H1 (cell line): ENCODE measurements at regions of chr6 and their contacts with region 1.

Region 1: DNA sequence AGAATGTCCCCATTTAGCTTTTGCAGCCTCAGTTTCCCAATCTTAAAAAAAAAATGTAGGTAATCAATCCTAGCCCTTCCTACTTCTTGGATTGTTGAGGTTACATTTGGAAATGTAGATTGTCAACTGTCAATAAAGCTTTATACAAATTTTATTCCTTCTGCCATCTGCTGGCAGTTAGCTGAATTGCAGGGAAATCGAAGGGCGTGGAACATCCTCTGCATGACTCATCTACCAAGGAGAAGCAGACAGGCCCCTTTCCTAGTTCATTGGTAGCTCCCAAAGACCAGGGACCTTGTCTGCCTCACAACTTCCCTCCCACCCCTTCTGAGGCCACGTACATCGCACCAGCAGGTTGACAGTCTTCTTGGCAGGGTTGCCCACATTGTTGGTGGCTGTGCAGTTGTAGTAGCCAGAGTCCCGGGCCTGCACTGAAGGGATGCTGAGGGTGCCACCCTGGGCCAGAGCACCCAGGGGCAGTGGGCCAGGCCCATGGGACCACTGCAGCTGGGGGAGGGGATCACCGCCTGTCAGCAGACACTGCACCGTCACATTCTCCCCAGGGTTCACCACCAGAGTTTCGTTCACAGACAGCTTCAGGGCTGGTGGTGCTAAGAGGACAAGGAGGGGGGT is 43.6 kb downstream of the MDGA1 start:
- DNase-seq: peak; percentile 15 to 81
- H3K4me3 ChIP-seq: no peak overlapping the region
- H3K27ac ChIP-seq: no peak overlapping the region
- H3K4me1 ChIP-seq: peaks cover 0 to 6% (median 1%) of the 10 kb centered on the region in 4 experiments; a peak in 3 of 7 replicates
- H3K27me3 ChIP-seq: peaks cover 3 to 21% (median 16%) of the 10 kb centered on the region in 4 experiments
- CTCF ChIP-seq: peak in 2 of 3 experiments; percentile 62 to 86; a peak in 3 of 4 replicates
- EP300 ChIP-seq: no peak
- POLR2A ChIP-seq: no peak
- RAD21 ChIP-seq: peak; percentile 25 to 36; a peak in 2 of 4 replicates

Region 2: DNA sequence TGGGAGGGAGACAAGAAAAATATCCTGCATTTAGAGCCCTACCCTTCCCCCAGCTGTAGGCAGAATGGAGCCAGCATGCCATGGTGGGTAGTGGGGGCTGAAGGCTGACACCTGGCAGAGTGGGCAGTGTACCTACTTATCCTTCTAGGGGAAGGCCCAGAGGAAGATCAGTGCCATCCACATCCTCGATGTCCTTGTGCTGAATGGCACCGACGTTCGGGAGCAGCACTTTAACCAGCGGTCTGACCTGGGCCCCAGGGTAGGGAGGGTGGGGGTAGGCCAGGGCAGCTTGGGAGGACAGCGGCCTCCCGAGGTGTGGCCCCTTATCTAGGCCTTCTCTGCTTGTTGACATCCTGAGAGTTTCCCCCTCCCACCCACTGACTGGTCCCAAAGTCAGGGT is 178.9 kb before region 1 on chr6:
- CTCF ChIA-PET with region 1: no interaction called
- POLR2A ChIA-PET with region 1: no interaction called
- DNase-seq: no peak
- H3K4me3 ChIP-seq: no peak overlapping the region
- H3K27ac ChIP-seq: no peak overlapping the region
- H3K4me1 ChIP-seq: peaks cover 0 to 1% (median 0%) of the 10 kb centered on the region in 4 experiments; a peak in 2 of 7 replicates
- H3K27me3 ChIP-seq: no peaks in the 10 kb centered on the region
- CTCF ChIP-seq: no peak
- EP300 ChIP-seq: no peak
- POLR2A ChIP-seq: no peak
- RAD21 ChIP-seq: no peak

Region 3: GRCh38 chr6:37607944-37608343 is 46.1 kb before region 1 on chr6:
- CTCF ChIA-PET with region 1: interaction called, 40 read pairs
- POLR2A ChIA-PET with region 1: interaction called, 3 read pairs
- DNase-seq: no peak
- H3K4me3 ChIP-seq: no peak overlapping the region
- H3K27ac ChIP-seq: no peak overlapping the region
- H3K4me1 ChIP-seq: no peaks in the 10 kb centered on the region
- H3K27me3 ChIP-seq: no peaks in the 10 kb centered on the region
- CTCF ChIP-seq: peak in 2 of 3 experiments; percentile 32 to 37; a peak in 2 of 4 replicates
- EP300 ChIP-seq: no peak
- POLR2A ChIP-seq: no peak
- RAD21 ChIP-seq: peak; percentile 8 to 56; a peak in 3 of 4 replicates

Region 4: DNA sequence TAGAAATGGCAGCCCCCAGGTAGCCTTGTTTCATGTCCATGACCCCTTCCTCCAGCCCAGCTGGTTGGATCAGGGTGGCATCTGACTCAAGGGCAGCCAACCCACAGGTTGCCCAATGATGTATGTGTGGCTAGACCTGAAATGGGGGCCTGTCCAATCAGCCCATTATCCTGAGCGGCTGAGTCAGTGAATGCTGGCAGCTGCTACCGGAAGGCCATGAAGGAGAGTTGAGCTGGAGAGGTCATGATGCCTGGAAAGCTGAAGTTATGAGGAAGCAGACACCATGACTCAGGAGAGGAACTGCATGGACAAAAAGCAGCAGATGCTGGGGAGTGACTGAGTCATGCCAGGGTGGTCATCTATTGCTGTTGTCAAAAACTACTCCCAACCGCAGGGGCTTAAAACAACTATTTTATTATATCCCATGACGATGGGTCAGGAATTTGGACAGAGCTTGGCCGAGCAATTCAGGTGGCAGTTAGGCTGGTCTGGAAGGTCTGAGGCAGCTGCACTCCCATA is 23.7 kb before region 1 on chr6:
- CTCF ChIA-PET with region 1: interaction called, 126 read pairs
- POLR2A ChIA-PET with region 1: interaction called, 3 read pairs
- DNase-seq: no peak
- H3K4me3 ChIP-seq: no peak overlapping the region
- H3K27ac ChIP-seq: no peak overlapping the region
- H3K4me1 ChIP-seq: peaks cover 0 to 8% (median 4%) of the 10 kb centered on the region in 4 experiments; a peak in 3 of 7 replicates
- H3K27me3 ChIP-seq: peaks cover 0 to 3% (median 2%) of the 10 kb centered on the region in 4 experiments; a peak in 3 of 7 replicates
- CTCF ChIP-seq: no peak
- EP300 ChIP-seq: no peak
- POLR2A ChIP-seq: no peak
- RAD21 ChIP-seq: no peak

Region 5: GRCh38 chr6:37679539-37680476 is 25.8 kb after region 1 on chr6:
- CTCF ChIA-PET with region 1: interaction called, 11 read pairs
- POLR2A ChIA-PET with region 1: interaction called, 4 read pairs
- DNase-seq: no peak
- H3K4me3 ChIP-seq: no peak overlapping the region
- H3K27ac ChIP-seq: no peak overlapping the region
- H3K4me1 ChIP-seq: peaks cover 0 to 8% (median 3%) of the 10 kb centered on the region in 4 experiments; a peak in 4 of 7 replicates
- H3K27me3 ChIP-seq: no peaks in the 10 kb centered on the region; a peak in 1 of 7 replicates
- CTCF ChIP-seq: no peak
- EP300 ChIP-seq: no peak
- POLR2A ChIP-seq: no peak
- RAD21 ChIP-seq: no peak

Region 6: GRCh38 chr6:37783856-37784584 is 130.0 kb after region 1 on chr6:
- CTCF ChIA-PET with region 1: no interaction called
- POLR2A ChIA-PET with region 1: no interaction called
- DNase-seq: peak in 1 of 2 experiments; percentile 66
- H3K4me3 ChIP-seq: peak overlapping the region; percentile 44 to 73 (median 66)
- H3K27ac ChIP-seq: 0 out of 2 replicates have a peak overlapping the region, but pooled peaks have one; percentile 14
- H3K4me1 ChIP-seq: peaks cover 1 to 36% (median 20%) of the 10 kb centered on the region in 4 experiments
- H3K27me3 ChIP-seq: peaks cover 0 to 18% (median 14%) of the 10 kb centered on the region in 4 experiments; a peak in 6 of 7 replicates
- CTCF ChIP-seq: no peak
- EP300 ChIP-seq: no peak
- POLR2A ChIP-seq: peak in 1 of 2 experiments; percentile 52; a peak in 2 of 3 replicates
- RAD21 ChIP-seq: no peak